WTC11 (cell line): ENCODE measurements at regions of chr17 and their contacts with region 1.

Region 1: GRCh38 chr17:64420143-64420971 is 28.6 kb upstream of the MILR1 start:
- DNase-seq: no peak
- ATAC-seq: peak; percentile 86
- H3K4me3 Mint-ChIP-seq: no peak overlapping the region
- H3K27ac Mint-ChIP-seq: no peak overlapping the region
- H3K4me1 Mint-ChIP-seq: no peaks in the 10 kb centered on the region
- H3K27me3 Mint-ChIP-seq: peaks cover 2% of the 10 kb centered on the region; the same call in 1 of the 2 replicates
- CTCF ChIP-seq: peak; percentile 52

Region 2: GRCh38 chr17:64306850-64307463 is 113.4 kb before region 1 on chr17:
- CTCF ChIA-PET with region 1: interaction called, 26 read pairs
- POLR2A ChIA-PET with region 1: no interaction called
- DNase-seq: peak; percentile 59
- ATAC-seq: peak; percentile 63; the same call in 1 of the 2 replicates
- H3K4me3 Mint-ChIP-seq: no peak overlapping the region
- H3K27ac Mint-ChIP-seq: no peak overlapping the region
- H3K4me1 Mint-ChIP-seq: no peaks in the 10 kb centered on the region
- H3K27me3 Mint-ChIP-seq: no peaks in the 10 kb centered on the region
- CTCF ChIP-seq: peak; percentile 90

Region 3: GRCh38 chr17:64327151-64327930 is 93.0 kb before region 1 on chr17:
- CTCF ChIA-PET with region 1: interaction called, 51 read pairs
- POLR2A ChIA-PET with region 1: no interaction called
- DNase-seq: no peak
- ATAC-seq: no peak
- H3K4me3 Mint-ChIP-seq: no peak overlapping the region
- H3K27ac Mint-ChIP-seq: no peak overlapping the region
- H3K4me1 Mint-ChIP-seq: no peaks in the 10 kb centered on the region
- H3K27me3 Mint-ChIP-seq: peaks cover 2% of the 10 kb centered on the region; the same call in 1 of the 2 replicates
- CTCF ChIP-seq: no peak

Region 4: GRCh38 chr17:64491034-64491859 is 70.9 kb after region 1 on chr17:
- CTCF ChIA-PET with region 1: interaction called, 97 read pairs
- POLR2A ChIA-PET with region 1: no interaction called
- DNase-seq: peak; percentile 29
- ATAC-seq: peak; percentile 78
- H3K4me3 Mint-ChIP-seq: no peak overlapping the region
- H3K27ac Mint-ChIP-seq: no peak overlapping the region
- H3K4me1 Mint-ChIP-seq: peaks cover 19% of the 10 kb centered on the region
- H3K27me3 Mint-ChIP-seq: no peaks in the 10 kb centered on the region
- CTCF ChIP-seq: peak; percentile 36; the same call in 1 of the 2 replicates

Region 5: GRCh38 chr17:64773836-64774761 is 353.7 kb after region 1 on chr17:
- CTCF ChIA-PET with region 1: interaction called, 12 read pairs
- POLR2A ChIA-PET with region 1: no interaction called
- DNase-seq: peak; percentile 88
- ATAC-seq: peak; percentile 78
- H3K4me3 Mint-ChIP-seq: peak overlapping the region; percentile 77
- H3K27ac Mint-ChIP-seq: no peak overlapping the region
- H3K4me1 Mint-ChIP-seq: peaks cover 19% of the 10 kb centered on the region
- H3K27me3 Mint-ChIP-seq: peaks cover 47% of the 10 kb centered on the region
- CTCF ChIP-seq: peak; percentile 48; the same call in 1 of the 2 replicates